ENCODE measurements at regions of chr1 and their contacts with region 1.

Region 1: GRCh38 chr1:222171005-222171404 is 376.9 kb downstream of the HHIPL2 start:
- DNase-seq: no peak
- H3K4me3 ChIP-seq: no peak overlapping the region
- H3K27ac ChIP-seq: no peak overlapping the region
- H3K27me3 ChIP-seq: no peaks in the 10 kb centered on the region
- CTCF ChIP-seq: peak in 52 of 56 donors; percentile 16 to 70 (median 49)

Region 2: GRCh38 chr1:221478050-221478949 is 692.7 kb before region 1 on chr1:
- intact Hi-C with region 1: loop called in 1 of 2 experiments (anchors 5 kb)
- DNase-seq: peak; percentile 21 to 77 (median 64)
- H3K4me3 ChIP-seq: peak overlapping the region in 6 of 59 donors; percentile 4 to 34 (median 20)
- H3K27ac ChIP-seq: peak overlapping the region in 3 of 59 donors; percentile 14 to 30 (median 29)
- H3K27me3 ChIP-seq: peaks cover 0 to 8% (median 0%) of the 10 kb centered on the region in 45 donors
- CTCF ChIP-seq: peak; percentile 19 to 84 (median 66)

Region 3: DNA sequence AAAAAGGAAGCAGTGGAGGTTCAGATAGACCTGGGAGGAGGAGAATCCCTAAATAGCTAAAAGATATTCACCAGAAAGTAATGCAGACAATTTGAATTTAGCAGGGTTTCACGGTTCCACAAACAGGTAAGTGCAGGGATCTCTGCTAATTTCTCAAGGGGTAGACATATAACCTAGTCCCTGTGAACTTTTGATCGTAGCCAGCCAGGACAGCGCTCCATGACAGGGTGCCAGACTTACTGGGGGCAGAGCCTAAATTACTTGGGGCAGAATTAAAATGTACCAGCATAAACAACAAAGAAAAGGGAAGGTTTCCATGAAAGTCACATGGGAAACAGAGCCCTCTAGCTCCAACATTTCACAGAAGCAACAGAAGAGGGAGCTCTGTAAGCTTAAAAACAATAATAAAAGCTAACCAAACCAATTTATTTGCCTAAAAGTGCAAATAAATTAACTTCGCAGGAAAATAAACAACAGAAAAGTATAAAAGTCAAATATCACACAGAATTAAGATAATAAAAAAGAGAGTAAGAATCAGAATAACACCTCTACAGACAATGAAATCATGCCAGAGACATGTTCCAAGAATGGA is 627.4 kb before region 1 on chr1:
- intact Hi-C with region 1: loop called in 1 of 2 experiments (anchors 5 kb)
- DNase-seq: no peak
- H3K4me3 ChIP-seq: no peak overlapping the region
- H3K27ac ChIP-seq: no peak overlapping the region
- H3K27me3 ChIP-seq: peaks cover 0 to 6% (median 0%) of the 10 kb centered on the region in 45 donors
- CTCF ChIP-seq: peak; percentile 25 to 80 (median 61)

Region 4: GRCh38 chr1:222216255-222216754 is 45.3 kb after region 1 on chr1:
- intact Hi-C with region 1: no loop called
- DNase-seq: no peak
- H3K4me3 ChIP-seq: no peak overlapping the region
- H3K27ac ChIP-seq: no peak overlapping the region
- H3K27me3 ChIP-seq: peaks cover 0 to 5% (median 0%) of the 10 kb centered on the region in 45 donors
- CTCF ChIP-seq: no peak

Measured in dorsolateral prefrontal cortex (tissue), 120 donors.